Activated CD4-positive, alpha-beta T cell treated with anti-CD3 and anti-CD28 coated beads for 36 hours (primary cell): ENCODE measurements at regions of chr11 and their contacts with region 1.

Region 1: GRCh38 chr11:62573592-62574362 is at the start of gene EEF1G:
- DNase-seq: peak; percentile 99
- ATAC-seq: peak; percentile 97
- H3K4me3 Mint-ChIP-seq: peak within 1 kb of the TSS; percentile 93
- H3K27ac Mint-ChIP-seq: peak within 1 kb of the TSS; percentile 97
- H3K4me1 Mint-ChIP-seq: peaks cover 43% of the 10 kb centered on the region
- H3K27me3 Mint-ChIP-seq: no peaks in the 10 kb centered on the region
- total RNA-seq, gene EEF1G: 1,986 to 2,351 TPM

Region 2: GRCh38 chr11:62315431-62315830 is 258.3 kb before region 1 on chr11:
- CTCF ChIA-PET with region 1: no interaction called
- POLR2A ChIA-PET with region 1: no interaction called
- intact Hi-C with region 1: no loop called
- DNase-seq: no peak
- ATAC-seq: no peak
- H3K4me3 Mint-ChIP-seq: no peak overlapping the region
- H3K27ac Mint-ChIP-seq: no peak overlapping the region
- H3K4me1 Mint-ChIP-seq: peaks cover 10% of the 10 kb centered on the region
- H3K27me3 Mint-ChIP-seq: peaks cover 17% of the 10 kb centered on the region

Region 3: GRCh38 chr11:62427630-62428233 is 146.0 kb before region 1 on chr11:
- CTCF ChIA-PET with region 1: interaction called, 12 read pairs
- POLR2A ChIA-PET with region 1: interaction called, 6 read pairs
- intact Hi-C with region 1: no loop called
- DNase-seq: peak; percentile 36
- ATAC-seq: peak; percentile 63
- H3K4me3 Mint-ChIP-seq: peak overlapping the region; percentile 5
- H3K27ac Mint-ChIP-seq: peak overlapping the region; percentile 70
- H3K4me1 Mint-ChIP-seq: peaks cover 29% of the 10 kb centered on the region
- H3K27me3 Mint-ChIP-seq: no peaks in the 10 kb centered on the region

Region 4: DNA sequence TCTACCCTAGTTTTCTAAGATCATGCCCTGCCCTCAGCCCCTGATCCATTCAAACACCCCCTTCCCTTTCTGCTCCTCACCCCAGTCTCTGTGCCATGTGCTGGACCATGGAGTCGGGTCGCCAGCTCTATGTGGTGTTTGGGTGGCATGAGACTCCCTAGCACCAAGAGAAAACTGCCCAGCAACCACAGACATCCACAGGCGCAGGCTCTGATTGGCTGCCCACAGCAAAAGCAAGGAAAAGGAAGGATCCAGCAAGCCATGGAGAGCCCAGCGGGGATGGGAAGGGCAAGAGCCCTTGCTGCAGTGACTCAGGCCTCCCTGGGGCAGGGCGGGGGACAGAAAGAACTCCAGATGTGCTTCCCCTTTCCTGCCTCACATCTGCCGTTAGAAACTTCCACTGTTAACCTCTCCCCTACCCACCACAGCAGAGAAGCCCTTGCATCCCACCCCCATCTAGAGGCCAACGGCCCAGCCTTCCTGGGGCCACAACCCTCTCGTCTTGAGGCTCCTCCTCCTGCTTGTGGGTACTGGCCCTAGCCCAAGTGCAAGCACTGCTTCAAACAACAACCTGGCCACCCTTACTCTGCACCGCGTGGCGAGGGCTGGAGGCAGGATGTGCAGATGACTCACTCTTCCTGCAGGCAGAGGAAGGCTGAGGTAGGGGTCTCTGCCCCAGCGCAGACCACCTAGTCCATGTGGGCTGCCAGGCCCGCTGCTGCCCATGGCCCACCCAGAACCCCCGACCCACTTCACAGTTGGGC is 17.5 kb before region 1 on chr11:
- CTCF ChIA-PET with region 1: interaction called, 15 read pairs
- POLR2A ChIA-PET with region 1: interaction called, 16 read pairs
- intact Hi-C with region 1: loop called (anchors 1 to 2 kb)
- DNase-seq: peak; percentile 92
- ATAC-seq: peak; percentile 65
- H3K4me3 Mint-ChIP-seq: peak overlapping the region; percentile 54
- H3K27ac Mint-ChIP-seq: peak overlapping the region; percentile 92
- H3K4me1 Mint-ChIP-seq: peaks cover 98% of the 10 kb centered on the region
- H3K27me3 Mint-ChIP-seq: no peaks in the 10 kb centered on the region

Region 5: GRCh38 chr11:62612366-62613290 is 38.9 kb after region 1 on chr11 and contains the starts of genes EML3 and ROM1:
- CTCF ChIA-PET with region 1: interaction called, 4 read pairs
- POLR2A ChIA-PET with region 1: no interaction called
- intact Hi-C with region 1: loop called in 1 of 2 experiments (anchors 1 kb)
- DNase-seq: peak; percentile 91
- ATAC-seq: peak; percentile 78
- H3K4me3 Mint-ChIP-seq: peak within 1 kb of the TSS; percentile 91
- H3K27ac Mint-ChIP-seq: peak within 1 kb of the TSS; percentile 90
- H3K4me1 Mint-ChIP-seq: peaks cover 37% of the 10 kb centered on the region
- H3K27me3 Mint-ChIP-seq: no peaks in the 10 kb centered on the region
- total RNA-seq, gene EML3: 101 to 112 TPM
- total RNA-seq, gene ROM1: 1.5 to 1.9 TPM

Region 6: DNA sequence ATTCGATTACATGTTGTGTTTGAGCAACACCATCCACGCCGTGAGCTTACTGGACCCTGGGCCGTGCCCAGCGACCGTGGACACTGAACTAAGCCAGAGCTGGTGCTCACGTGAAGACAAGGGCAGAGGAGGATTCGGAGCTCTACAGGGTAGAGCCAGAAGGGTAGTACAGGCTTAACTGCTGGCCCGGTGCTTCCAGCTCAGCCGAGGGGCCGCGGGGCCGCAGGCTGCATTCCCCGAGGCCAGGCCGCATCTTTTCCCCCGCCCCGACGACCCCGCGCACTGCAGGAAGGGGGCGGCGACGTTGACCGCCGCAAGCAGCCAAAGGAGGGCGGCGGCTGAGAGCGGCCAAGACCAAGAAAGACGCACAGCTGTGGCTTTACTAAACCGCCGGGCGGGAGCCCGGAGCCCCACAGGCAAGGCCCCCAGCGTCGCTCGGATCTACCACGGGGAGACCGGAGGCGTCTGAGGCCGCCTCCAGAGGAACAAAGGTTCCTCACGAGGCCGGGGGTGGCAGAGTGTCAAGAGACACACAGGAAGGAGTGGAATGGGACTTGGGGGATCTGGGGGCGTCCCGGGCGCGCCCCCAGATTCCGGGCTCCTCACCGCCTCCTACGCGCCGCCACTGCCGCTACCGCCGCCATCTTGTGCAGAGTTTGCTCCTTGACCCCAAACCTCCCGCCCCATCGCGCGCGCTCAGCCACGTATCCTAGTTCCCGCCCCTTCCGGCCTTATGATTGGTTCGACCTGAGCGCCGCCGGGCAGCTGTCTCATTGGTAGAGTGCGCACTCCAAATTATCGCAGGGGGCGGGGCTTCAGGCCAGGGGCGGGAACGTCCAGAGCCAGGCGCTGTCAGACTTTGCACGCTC is 72.4 kb after region 1 on chr11 and contains the start of gene GANAB:
- CTCF ChIA-PET with region 1: interaction called, 3 read pairs
- POLR2A ChIA-PET with region 1: interaction called, 5 read pairs
- intact Hi-C with region 1: loop called in 1 of 2 experiments (anchors 1 kb)
- DNase-seq: peak; percentile 100
- ATAC-seq: peak; percentile 99
- H3K4me3 Mint-ChIP-seq: peak within 1 kb of the TSS; percentile 93
- H3K27ac Mint-ChIP-seq: peak within 1 kb of the TSS; percentile 93
- H3K4me1 Mint-ChIP-seq: peaks cover 34% of the 10 kb centered on the region
- H3K27me3 Mint-ChIP-seq: no peaks in the 10 kb centered on the region
- total RNA-seq, gene GANAB: 208 to 218 TPM

Region 7: DNA sequence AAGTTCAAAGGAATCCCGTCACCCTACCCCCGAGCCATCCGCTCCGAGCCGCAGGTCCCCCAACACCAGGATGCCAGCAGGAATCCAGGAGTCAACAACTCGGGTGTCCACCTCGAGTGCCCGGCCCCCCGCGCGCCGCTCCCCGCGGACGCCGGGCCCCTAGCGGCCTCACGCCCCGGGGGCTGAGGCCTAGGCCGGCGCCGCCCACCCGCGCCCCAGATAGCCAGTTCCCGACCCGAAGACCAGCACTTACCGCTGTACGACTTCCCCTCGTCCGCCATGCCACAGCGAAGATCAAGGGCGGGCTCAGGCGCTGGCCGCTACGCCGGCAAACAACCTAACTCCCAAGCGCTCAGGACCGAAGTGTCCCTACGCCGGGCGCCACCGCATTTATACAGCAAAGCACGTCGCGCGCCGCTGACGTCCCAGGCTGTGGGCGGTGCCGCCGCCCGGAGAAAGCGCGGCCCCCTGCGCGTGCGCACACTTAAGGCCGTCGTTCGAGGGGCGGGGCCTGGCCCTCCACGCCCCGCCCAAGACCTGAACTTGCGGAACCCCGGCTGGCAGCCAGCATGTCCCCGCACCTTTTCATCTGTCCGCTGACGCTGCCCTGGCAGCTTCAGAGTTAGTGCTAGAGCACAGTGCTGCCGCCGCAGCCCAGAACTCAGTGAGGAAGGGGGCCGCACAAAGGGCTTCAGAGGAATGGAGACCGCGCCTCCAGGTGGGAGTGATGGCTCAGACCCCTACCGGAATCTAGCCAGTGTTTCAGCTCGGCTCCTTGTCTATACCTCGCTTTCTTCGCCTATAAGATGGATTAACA is 231.5 kb after region 1 on chr11 and contains the start of gene NXF1:
- CTCF ChIA-PET with region 1: no interaction called
- POLR2A ChIA-PET with region 1: no interaction called
- intact Hi-C with region 1: loop called in 1 of 2 experiments (anchors 1 kb)
- DNase-seq: peak; percentile 97
- ATAC-seq: peak; percentile 79
- H3K4me3 Mint-ChIP-seq: peak within 1 kb of the TSS; percentile 99
- H3K27ac Mint-ChIP-seq: peak within 1 kb of the TSS; percentile 97
- H3K4me1 Mint-ChIP-seq: peaks cover 29% of the 10 kb centered on the region
- H3K27me3 Mint-ChIP-seq: no peaks in the 10 kb centered on the region
- total RNA-seq, gene NXF1: 89.5 to 97.6 TPM